PC-3 (cell line): ENCODE measurements at regions of chr2 and their contacts with region 1.

Region 1: GRCh38 chr2:160493227-160494028 is at the start of gene RBMS1:
- DNase-seq: peak; percentile 63
- ATAC-seq: peak; percentile 48
- H3K4me3 ChIP-seq: peak within 1 kb of the TSS; percentile 93
- H3K27ac ChIP-seq: peak within 1 kb of the TSS; percentile 84
- H3K4me1 ChIP-seq: peaks cover 32% of the 10 kb centered on the region; the same call in 1 of the 2 replicates
- H3K27me3 ChIP-seq: no peaks in the 10 kb centered on the region
- CTCF ChIP-seq: no peak
- total RNA-seq, gene RBMS1: 36.4 and 38.8 TPM in 2 replicates

Region 2: DNA sequence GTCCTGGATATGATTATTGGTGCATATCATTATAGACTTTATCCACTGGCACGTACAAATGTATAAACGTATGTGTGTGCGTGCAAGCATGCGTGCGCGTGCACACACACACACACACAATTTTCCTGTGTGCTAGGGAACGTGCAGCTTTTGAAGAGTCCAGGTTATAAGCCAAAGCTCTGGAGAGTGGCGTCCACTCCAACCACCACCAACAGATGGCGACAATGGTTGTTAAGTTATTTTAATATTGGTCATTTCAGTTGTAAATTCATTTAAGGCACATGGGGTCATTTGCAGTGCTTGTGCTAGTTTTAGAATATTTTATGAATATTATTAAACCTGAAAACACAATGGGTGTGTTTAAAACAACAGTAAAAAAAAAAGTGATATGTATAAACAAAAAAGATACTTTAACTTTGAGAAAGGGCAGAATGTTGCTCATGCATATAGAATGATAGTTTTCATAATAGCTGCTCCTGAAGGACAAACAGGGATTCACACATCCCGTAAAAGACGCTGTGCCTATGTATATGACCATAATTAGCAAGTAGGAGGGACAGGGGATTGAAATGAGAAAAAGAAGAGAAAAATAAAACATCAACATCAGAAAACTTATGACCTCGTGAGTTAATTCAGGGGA is 169.1 kb before region 1 on chr2:
- CTCF ChIA-PET with region 1: no interaction called
- POLR2A ChIA-PET with region 1: no interaction called
- intact Hi-C with region 1: loop called (anchors 10 kb)
- DNase-seq: peak; percentile 77
- ATAC-seq: peak; percentile 67; the same call in 1 of the 2 replicates
- H3K4me3 ChIP-seq: no peak overlapping the region
- H3K27ac ChIP-seq: no peak overlapping the region
- H3K4me1 ChIP-seq: peaks cover 6% of the 10 kb centered on the region; the same call in 1 of the 2 replicates
- H3K27me3 ChIP-seq: no peaks in the 10 kb centered on the region
- CTCF ChIP-seq: peak; percentile 89

Region 3: DNA sequence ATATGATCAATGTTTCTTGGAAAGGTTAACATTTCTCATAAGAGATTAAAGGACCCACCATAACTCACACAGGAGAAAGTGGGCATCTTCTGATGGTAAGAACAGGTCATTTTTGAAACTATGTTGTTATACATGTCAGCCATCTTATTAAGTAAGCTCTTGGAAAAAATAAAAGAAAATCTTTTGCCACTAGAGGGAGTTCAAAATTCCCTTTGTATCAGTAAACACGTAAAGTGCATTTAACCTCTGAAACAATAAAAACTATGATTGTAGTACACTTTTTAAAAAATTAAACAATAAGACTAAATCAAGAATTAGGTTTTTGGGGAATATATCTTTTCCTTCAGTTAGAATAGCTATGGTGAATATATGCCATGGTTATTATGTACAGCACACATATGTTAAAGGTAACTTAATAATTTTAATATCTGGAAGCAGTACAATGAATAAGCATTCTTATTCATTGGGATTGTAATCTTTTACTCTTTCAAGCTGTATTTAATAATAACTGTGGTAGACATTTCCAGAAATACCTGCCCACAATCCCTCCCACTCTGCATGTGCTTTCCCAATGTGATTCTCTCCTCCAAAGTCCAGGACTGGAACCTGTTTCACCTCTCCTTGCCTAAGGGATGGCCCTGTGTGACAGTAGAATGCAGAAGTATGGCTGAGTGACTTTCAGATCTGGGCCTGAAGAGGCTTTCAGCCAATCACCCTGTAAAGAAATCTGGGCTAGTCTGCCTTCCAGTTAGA is 64.0 kb before region 1 on chr2:
- CTCF ChIA-PET with region 1: no interaction called
- POLR2A ChIA-PET with region 1: no interaction called
- intact Hi-C with region 1: loop called (anchors 2 kb)
- DNase-seq: peak; percentile 89
- ATAC-seq: no peak
- H3K4me3 ChIP-seq: no peak overlapping the region
- H3K27ac ChIP-seq: 0 out of 2 replicates have a peak overlapping the region, but pooled peaks have one; percentile 1
- H3K4me1 ChIP-seq: peaks cover 31% of the 10 kb centered on the region
- H3K27me3 ChIP-seq: no peaks in the 10 kb centered on the region
- CTCF ChIP-seq: peak; percentile 81

Region 4: GRCh38 chr2:160457588-160457987 is 35.8 kb before region 1 on chr2:
- CTCF ChIA-PET with region 1: no interaction called
- POLR2A ChIA-PET with region 1: no interaction called
- intact Hi-C with region 1: no loop called
- DNase-seq: no peak
- ATAC-seq: no peak
- H3K4me3 ChIP-seq: no peak overlapping the region
- H3K27ac ChIP-seq: no peak overlapping the region
- H3K4me1 ChIP-seq: no peaks in the 10 kb centered on the region
- H3K27me3 ChIP-seq: no peaks in the 10 kb centered on the region
- CTCF ChIP-seq: no peak

Region 5: DNA sequence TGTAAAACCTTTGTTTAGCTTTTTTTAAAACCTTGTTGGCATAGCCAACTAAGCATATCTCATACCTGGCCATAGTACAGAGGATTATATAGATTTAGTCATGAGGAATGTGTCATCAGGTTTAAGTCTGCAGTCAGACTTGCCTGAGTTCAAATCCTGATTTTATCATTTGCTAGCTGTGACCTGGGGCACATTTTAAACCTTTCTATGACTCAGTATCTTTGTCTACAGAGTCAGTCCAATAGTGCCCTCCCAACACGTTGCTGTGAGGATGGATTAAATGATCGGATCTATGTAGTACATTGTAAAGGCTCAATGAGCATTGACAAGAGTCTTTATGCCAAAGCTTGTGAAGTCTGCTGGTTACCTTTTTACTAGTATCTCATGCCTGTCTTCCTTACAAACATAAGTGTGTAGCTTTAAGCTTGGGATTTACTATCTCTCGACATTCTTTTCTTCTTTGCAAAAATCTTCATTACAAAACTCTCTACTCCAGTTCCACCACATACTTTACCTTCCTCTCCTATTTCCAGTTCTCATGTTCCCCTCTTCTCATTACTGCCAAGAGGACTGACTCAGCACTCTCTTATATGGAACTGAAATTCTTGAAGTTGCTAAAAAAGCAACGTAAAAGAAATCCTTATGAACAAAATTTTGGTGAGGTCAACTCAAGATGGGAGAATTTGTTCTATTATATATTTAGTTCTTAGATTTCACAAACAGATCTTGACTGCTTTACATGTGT is 68.3 kb after region 1 on chr2:
- CTCF ChIA-PET with region 1: no interaction called
- POLR2A ChIA-PET with region 1: no interaction called
- intact Hi-C with region 1: loop called (anchors 5 kb)
- DNase-seq: peak; percentile 95
- ATAC-seq: peak; percentile 81
- H3K4me3 ChIP-seq: peak overlapping the region; percentile 28; the same call in 1 of the 2 replicates
- H3K27ac ChIP-seq: peak overlapping the region; percentile 93
- H3K4me1 ChIP-seq: peaks cover 30% of the 10 kb centered on the region
- H3K27me3 ChIP-seq: no peaks in the 10 kb centered on the region
- CTCF ChIP-seq: no peak

Region 6: GRCh38 chr2:160652236-160652635 is 158.8 kb after region 1 on chr2:
- CTCF ChIA-PET with region 1: no interaction called
- POLR2A ChIA-PET with region 1: no interaction called
- intact Hi-C with region 1: loop called (anchors 5 kb)
- DNase-seq: no peak
- ATAC-seq: no peak
- H3K4me3 ChIP-seq: no peak overlapping the region
- H3K27ac ChIP-seq: no peak overlapping the region
- H3K4me1 ChIP-seq: peaks cover 53% of the 10 kb centered on the region
- H3K27me3 ChIP-seq: no peaks in the 10 kb centered on the region
- CTCF ChIP-seq: no peak

Region 7: GRCh38 chr2:160752496-160753330 is 259.3 kb after region 1 on chr2:
- CTCF ChIA-PET with region 1: no interaction called
- POLR2A ChIA-PET with region 1: no interaction called
- intact Hi-C with region 1: loop called (anchors 2 kb)
- DNase-seq: peak; percentile 91
- ATAC-seq: peak; percentile 56
- H3K4me3 ChIP-seq: peak overlapping the region; percentile 51
- H3K27ac ChIP-seq: peak overlapping the region; percentile 99
- H3K4me1 ChIP-seq: peaks cover 61% of the 10 kb centered on the region
- H3K27me3 ChIP-seq: no peaks in the 10 kb centered on the region
- CTCF ChIP-seq: no peak